Right ventricle myocardium inferior (tissue), 1 donor: ENCODE measurements at regions of chr3 and their contacts with region 1.

Region 1: DNA sequence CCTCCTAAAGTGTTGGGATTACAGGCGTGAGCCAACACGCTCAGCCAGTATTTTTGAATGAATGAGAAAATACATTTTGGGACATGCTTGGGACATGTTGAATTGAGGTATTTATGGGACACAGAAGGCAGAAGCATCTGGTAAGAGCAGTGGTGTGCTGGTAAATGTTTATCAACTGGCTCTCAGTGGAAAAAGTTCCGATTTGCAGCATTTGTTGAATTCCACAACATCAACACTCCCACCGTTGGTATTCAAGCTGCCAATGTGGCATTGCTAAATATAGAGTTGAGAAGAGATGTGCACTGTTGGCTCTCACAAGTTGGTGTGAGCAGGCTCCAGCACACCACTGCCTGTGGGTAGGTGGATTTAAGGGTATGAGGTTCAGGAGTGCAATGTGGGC is 35.8 kb upstream of the LRRFIP2 start:
- DNase-seq: no peak
- ATAC-seq: peak; percentile 60

Region 2: GRCh38 chr3:36993326-36994283 is 216.6 kb before region 1 on chr3 and contains the start of gene MLH1:
- intact Hi-C with region 1: loop called (anchors 10 kb)
- DNase-seq: peak; percentile 97
- ATAC-seq: peak; percentile 96
- total RNA-seq, gene MLH1: 49.3 TPM

Region 3: DNA sequence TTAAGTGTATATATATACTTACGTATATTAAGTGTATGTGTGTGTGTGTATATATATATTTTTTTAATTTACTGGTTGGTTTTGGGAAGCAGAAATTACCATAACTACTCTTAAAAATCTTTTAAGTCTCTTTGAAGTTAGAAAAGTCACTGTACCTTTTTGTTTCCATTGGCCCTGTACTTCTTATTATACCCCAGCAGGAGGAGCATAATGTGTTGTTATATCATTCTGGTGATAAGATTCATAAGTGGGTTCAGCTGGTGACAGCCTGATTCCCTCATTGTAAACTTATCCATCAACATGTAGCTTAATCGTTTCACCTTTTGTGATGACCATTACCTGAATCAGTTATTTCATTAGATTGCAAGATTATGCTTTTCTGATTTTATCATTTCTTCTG is 186.1 kb before region 1 on chr3:
- intact Hi-C with region 1: loop called (anchors 2 kb)
- DNase-seq: no peak
- ATAC-seq: no peak